Caco-2 (cell line): ENCODE measurements at regions of chr16 and their contacts with region 1.

Region 1: DNA sequence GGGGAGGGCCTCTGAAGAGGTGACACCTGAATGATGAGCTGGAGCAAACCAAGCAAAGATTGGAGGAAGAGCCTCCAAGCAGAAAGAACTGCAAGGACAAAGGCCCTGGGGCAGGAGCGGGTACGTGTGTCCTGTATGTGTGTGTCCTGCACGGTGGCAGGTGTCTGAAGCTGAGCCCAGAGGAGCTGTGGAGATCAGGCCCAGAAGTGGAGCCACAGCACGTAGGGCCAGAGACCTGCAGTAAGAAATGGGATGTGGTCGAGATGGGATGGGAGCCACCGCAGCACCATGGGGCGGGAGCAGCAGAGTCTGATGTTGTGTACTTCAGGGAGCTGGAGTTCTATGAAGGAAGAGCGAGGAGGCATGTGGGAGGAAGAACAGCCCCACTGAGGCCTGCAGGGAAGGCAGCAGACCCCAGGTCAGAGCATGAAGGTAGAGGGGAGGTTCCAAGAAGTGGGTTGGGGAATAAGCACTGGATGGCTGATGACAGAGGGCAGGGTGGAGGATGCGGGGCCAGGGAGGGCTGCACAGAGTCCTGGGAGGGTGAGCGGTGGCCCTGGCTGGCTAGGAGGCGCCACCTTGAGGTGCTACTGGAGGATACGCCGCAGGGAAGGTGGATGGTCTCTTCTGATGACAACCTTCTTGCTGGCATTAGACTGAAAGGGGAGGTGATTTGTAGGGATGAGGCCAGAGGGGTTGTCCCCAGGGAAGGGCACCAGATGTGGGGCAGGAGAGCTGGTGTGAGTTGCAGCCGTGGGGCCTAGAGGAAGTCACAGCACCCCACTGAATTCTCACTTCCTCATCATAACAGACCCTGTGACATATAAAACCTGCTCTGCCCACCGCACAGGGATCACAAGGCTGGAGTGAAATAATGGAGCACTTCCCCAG is 10.6 kb upstream of the CETP start:
- DNase-seq: peak; percentile 78 to 82
- H3K4me3 ChIP-seq: no peak overlapping the region
- H3K4me3 Mint-ChIP-seq: no peak overlapping the region
- H3K27ac Mint-ChIP-seq: peak overlapping the region; percentile 4
- H3K4me1 ChIP-seq: no peaks in the 10 kb centered on the region
- H3K4me1 Mint-ChIP-seq: peaks cover 16% of the 10 kb centered on the region
- H3K27me3 ChIP-seq: no peaks in the 10 kb centered on the region
- H3K27me3 Mint-ChIP-seq: no peaks in the 10 kb centered on the region
- CTCF ChIP-seq: peak; percentile 78 to 85

Region 2: GRCh38 chr16:56729735-56730662 is 221.1 kb before region 1 on chr16 and contains the start of gene NUP93:
- CTCF ChIA-PET with region 1: no interaction called
- POLR2A ChIA-PET with region 1: no interaction called
- intact Hi-C with region 1: loop called (anchors 10 kb)
- DNase-seq: peak; percentile 94 to 96
- H3K4me3 ChIP-seq: peak within 1 kb of the TSS; percentile 82
- H3K4me3 Mint-ChIP-seq: no peak within 1 kb of the TSS
- H3K27ac Mint-ChIP-seq: peak within 1 kb of the TSS; percentile 65
- H3K4me1 ChIP-seq: peaks cover 6% of the 10 kb centered on the region; the same call in 1 of the 2 replicates
- H3K4me1 Mint-ChIP-seq: peaks cover 10% of the 10 kb centered on the region
- H3K27me3 ChIP-seq: no peaks in the 10 kb centered on the region
- H3K27me3 Mint-ChIP-seq: no peaks in the 10 kb centered on the region
- CTCF ChIP-seq: no peak
- total RNA-seq, gene NUP93: 148 and 149 TPM in 2 replicates

Region 3: DNA sequence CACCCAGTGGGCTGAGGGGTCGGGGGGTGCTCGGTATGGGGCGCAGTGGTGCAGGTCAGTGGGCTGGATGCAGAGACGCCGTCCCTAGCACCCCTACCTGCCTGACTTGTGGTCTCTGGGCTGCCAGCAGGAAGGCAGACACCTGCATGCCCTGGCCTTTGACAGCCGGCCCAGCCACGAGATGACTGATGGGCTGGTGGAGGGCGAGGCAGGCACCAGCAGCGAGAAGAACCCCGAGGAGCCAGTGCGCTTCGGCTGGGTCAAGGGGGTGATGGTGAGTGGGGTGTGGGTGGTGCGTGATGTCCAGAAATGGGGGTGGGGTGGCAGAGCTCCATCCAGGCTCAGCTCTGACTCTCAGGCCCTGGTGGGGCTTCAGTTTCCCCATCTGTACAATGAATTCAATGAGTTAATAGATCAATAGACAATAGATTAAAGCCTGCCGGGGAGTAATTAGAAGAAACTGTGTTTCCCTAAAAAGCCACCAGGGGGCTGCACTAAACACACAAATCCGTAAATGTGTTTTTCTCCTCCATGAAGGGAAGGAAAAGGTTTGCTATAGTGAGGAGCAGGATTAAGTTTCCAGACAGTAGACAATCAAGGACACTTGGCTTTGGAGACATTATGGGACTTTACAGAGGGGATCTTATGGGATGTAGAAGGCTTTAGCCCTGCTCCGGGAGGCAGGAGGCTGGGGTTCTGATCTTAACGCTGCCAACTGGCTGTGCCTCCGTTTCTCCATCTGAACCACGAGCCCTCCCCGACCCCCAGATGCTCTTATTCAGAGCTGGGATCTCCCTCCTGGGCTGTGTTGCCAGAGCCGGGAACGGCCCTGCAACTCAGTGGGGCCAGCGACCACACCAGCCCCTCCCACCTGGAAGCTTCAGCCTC is 83.9 kb before region 1 on chr16:
- CTCF ChIA-PET with region 1: interaction called, 5 read pairs
- POLR2A ChIA-PET with region 1: no interaction called
- intact Hi-C with region 1: loop called (anchors 1 kb)
- DNase-seq: peak in 1 of 2 experiments; percentile 68
- H3K4me3 ChIP-seq: no peak overlapping the region
- H3K4me3 Mint-ChIP-seq: no peak overlapping the region
- H3K27ac Mint-ChIP-seq: peak overlapping the region; percentile 60
- H3K4me1 ChIP-seq: peaks cover 38% of the 10 kb centered on the region
- H3K4me1 Mint-ChIP-seq: peaks cover 35% of the 10 kb centered on the region
- H3K27me3 ChIP-seq: no peaks in the 10 kb centered on the region
- H3K27me3 Mint-ChIP-seq: no peaks in the 10 kb centered on the region
- CTCF ChIP-seq: peak; percentile 76 to 83

Region 4: DNA sequence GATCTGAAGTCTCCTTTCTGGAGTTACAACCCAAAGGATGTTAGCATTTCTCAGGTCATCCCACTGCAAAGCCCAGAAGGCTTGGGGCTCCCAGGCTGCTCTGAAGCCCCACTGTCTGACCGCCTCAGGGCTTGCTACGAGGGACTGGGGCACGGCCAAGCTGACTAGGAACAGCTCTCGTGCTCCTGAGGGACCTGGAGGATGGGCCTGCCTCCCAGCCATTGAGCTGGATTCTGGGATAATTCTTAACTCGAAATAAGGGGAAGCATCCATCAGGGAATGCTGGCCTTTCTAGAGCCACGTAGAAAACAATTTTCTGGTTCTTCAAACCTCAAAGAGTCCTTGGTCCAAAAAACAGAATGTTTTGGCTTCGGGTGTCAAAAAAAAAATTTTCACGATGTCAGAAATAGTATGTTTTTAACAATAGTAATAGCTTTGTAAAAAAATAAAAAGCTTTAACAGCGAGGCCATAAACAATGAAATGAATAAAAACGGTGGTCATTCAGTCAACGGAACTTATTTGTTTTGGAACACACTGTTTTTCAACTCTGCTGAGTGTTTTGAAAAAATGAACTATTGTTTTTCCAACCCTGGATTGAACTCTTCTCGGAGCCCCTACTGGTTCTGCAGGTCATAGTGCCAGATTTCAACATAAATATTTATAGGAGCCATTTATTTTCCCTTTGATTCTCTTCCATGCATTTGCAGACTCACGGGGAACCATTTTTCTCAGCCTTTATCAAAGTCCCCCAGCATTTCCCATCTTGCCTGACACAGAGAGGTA is 35.6 kb before region 1 on chr16:
- CTCF ChIA-PET with region 1: no interaction called
- POLR2A ChIA-PET with region 1: no interaction called
- intact Hi-C with region 1: no loop called
- DNase-seq: no peak
- H3K4me3 ChIP-seq: no peak overlapping the region
- H3K4me3 Mint-ChIP-seq: no peak overlapping the region
- H3K27ac Mint-ChIP-seq: no peak overlapping the region
- H3K4me1 ChIP-seq: peaks cover 68% of the 10 kb centered on the region
- H3K4me1 Mint-ChIP-seq: peaks cover 63% of the 10 kb centered on the region
- H3K27me3 ChIP-seq: no peaks in the 10 kb centered on the region
- H3K27me3 Mint-ChIP-seq: no peaks in the 10 kb centered on the region
- CTCF ChIP-seq: no peak

Region 5: DNA sequence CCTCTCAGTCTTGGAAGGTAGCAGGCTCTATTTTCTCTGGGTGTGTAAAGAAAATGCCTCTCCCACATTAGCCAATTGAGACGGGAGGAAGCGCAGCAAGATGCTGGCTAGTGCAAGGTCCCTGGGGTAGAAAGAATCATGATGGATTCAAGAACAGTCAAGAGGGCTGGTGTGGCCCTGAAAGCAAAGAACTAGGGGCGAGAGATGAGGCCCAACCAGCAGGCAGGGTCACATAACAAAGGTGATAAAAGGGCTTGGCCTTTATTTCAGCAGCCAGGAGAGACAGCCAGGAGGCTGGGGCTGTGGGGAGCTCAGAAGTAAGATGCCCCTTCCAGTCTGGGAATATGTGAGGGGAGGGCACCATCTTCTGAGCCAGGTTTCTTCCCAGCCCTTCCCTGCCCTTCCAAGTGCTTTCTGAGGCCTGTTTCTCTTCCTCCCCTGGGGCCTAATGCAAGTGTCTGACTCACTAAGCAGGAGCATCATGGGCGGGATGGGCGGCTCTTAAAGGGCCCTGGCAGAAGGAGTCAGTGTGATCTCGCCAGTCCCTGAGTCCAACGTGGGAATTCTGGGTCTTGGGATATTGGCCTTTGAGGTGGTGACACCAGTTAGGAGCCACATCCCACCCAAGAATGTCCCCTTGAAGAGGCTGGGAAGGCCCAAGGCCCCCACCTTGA is 34.3 kb after region 1 on chr16:
- CTCF ChIA-PET with region 1: no interaction called
- POLR2A ChIA-PET with region 1: no interaction called
- intact Hi-C with region 1: no loop called
- DNase-seq: no peak
- H3K4me3 ChIP-seq: no peak overlapping the region
- H3K4me3 Mint-ChIP-seq: no peak overlapping the region
- H3K27ac Mint-ChIP-seq: no peak overlapping the region
- H3K4me1 ChIP-seq: peaks cover 17% of the 10 kb centered on the region
- H3K4me1 Mint-ChIP-seq: peaks cover 8% of the 10 kb centered on the region
- H3K27me3 ChIP-seq: peaks cover 3% of the 10 kb centered on the region; the same call in 1 of the 2 replicates
- H3K27me3 Mint-ChIP-seq: peaks cover 3% of the 10 kb centered on the region
- CTCF ChIP-seq: no peak

Region 6: GRCh38 chr16:57045694-57046381 is 94.7 kb after region 1 on chr16:
- CTCF ChIA-PET with region 1: no interaction called
- POLR2A ChIA-PET with region 1: no interaction called
- intact Hi-C with region 1: loop called (anchors 5 kb)
- DNase-seq: peak; percentile 58 to 64
- H3K4me3 ChIP-seq: no peak overlapping the region
- H3K4me3 Mint-ChIP-seq: no peak overlapping the region
- H3K27ac Mint-ChIP-seq: no peak overlapping the region
- H3K4me1 ChIP-seq: no peaks in the 10 kb centered on the region
- H3K4me1 Mint-ChIP-seq: no peaks in the 10 kb centered on the region
- H3K27me3 ChIP-seq: no peaks in the 10 kb centered on the region
- H3K27me3 Mint-ChIP-seq: peaks cover 4% of the 10 kb centered on the region
- CTCF ChIP-seq: peak; percentile 47 to 89